ENCODE measurements at regions of chr11 and their contacts with region 1.

Region 1: GRCh38 chr11:22875869-22876473 is 15.7 kb upstream of the CCDC179 start:
- DNase-seq: peak; percentile 89
- H3K4me3 ChIP-seq: no peak overlapping the region
- H3K27ac ChIP-seq: no peak overlapping the region
- H3K4me1 ChIP-seq: peaks cover 3% of the 10 kb centered on the region
- H3K27me3 ChIP-seq: no peaks in the 10 kb centered on the region
- CTCF ChIP-seq: peak; percentile 52 to 60
- POLR2A ChIP-seq: no peak

Region 2: DNA sequence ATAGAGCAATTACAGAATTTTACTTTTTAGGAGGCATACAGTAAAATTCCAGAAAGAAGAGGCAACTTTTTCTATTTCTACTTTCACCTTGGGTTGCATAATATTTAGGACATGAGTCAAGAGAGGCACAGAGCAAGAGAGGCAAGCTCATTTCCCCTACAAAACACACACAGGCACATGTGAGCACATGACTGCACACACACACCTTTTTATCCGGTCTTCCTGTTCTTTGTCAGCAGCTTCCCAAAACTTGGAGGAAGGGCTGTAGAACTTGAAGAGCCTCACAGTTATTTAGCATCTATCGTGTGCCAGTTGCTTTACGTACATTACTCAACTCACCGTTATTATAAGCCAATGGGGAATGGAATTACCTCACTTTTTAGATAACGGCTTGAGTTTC is 22.1 kb after region 1 on chr11:
- CTCF ChIA-PET with region 1: interaction called, 10 read pairs
- POLR2A ChIA-PET with region 1: no interaction called
- dilution Hi-C with region 1: no loop called
- intact Hi-C with region 1: no loop called
- DNase-seq: no peak
- H3K4me3 ChIP-seq: no peak overlapping the region
- H3K27ac ChIP-seq: no peak overlapping the region
- H3K4me1 ChIP-seq: no peaks in the 10 kb centered on the region
- H3K27me3 ChIP-seq: peaks cover 2% of the 10 kb centered on the region in 2 experiments
- CTCF ChIP-seq: no peak
- POLR2A ChIP-seq: no peak

Region 3: DNA sequence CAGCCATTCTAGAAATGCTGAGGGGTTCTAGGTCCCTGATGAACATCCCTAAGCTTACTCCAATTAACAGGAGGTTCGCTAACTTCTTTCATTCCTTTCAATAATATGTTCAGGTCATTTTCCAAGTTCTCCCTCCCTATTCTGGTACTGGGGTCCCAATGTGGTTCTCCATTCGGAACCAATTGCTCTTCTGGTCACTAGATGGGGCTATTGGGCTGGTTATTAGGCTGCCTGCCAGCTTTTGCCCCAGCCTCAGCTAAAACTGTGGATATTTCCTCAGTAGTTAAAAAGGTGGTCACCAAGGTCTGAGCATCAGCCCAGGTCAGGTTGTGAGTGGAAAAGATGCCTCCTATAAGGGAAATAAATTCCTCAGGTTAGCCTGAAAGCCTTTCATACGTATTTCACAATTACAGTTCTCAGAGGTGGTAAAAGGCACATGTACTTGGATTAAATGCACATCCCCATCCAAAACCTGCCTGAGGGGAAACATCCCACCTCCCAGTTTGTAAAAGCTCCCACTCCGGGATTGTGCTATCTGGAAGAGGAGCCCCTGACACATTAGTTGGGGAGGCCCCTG is 145.4 kb after region 1 on chr11:
- CTCF ChIA-PET with region 1: interaction called, 12 read pairs
- POLR2A ChIA-PET with region 1: no interaction called
- dilution Hi-C with region 1: no loop called
- intact Hi-C with region 1: loop called (anchors 1 kb)
- DNase-seq: peak; percentile 33
- H3K4me3 ChIP-seq: no peak overlapping the region
- H3K27ac ChIP-seq: no peak overlapping the region
- H3K4me1 ChIP-seq: no peaks in the 10 kb centered on the region
- H3K27me3 ChIP-seq: no peaks in the 10 kb centered on the region
- CTCF ChIP-seq: peak; percentile 60 to 66
- POLR2A ChIP-seq: no peak

Region 4: DNA sequence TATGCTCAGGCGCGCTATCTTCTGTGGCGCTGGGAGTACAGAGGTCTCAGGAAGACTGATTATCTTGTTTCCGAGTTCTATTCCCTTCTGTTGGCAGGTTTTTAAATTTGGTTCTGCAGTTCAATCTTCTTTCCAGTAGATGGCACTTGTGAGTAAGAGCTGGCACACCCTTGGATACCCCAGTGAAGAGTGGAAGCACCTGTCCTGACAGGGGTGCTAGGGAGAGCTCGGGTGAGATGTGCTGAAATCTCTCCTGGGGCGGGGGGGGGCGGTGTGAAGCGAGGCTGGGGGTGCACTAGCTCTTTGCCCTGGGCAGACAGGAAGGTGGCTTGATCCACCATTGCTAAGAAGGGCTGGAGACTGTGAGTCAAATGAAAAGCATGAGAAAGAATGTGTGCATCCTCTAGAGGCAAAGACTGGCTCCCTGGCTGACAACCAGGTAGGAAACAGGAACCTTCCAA is 664.2 kb after region 1 on chr11:
- CTCF ChIA-PET with region 1: interaction called, 8 read pairs
- POLR2A ChIA-PET with region 1: no interaction called
- dilution Hi-C with region 1: no loop called
- intact Hi-C with region 1: loop called (anchors 2 kb)
- DNase-seq: peak; percentile 61
- H3K4me3 ChIP-seq: no peak overlapping the region
- H3K27ac ChIP-seq: no peak overlapping the region
- H3K4me1 ChIP-seq: peaks cover 7% of the 10 kb centered on the region
- H3K27me3 ChIP-seq: no peaks in the 10 kb centered on the region
- CTCF ChIP-seq: peak; percentile 67 to 74
- POLR2A ChIP-seq: no peak

Region 5: DNA sequence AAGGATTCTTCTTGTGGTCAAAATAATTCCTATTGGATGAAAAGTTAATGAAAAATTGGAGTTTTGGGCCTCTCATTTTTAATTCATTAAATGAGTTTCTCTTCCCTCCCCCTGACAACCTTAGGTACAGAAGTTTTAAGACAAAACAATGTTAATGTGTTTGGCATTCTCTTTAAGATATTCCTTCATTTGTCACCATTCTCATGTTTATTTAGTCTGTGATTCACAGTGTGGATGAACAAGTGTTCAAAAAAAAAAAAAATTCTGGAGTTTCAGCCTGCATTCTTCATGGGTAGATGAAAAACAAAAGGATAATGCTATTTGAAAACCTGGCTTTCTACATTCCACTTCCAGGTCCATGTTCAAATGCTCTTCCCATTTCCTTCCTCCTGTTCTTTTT is 1448.2 kb after region 1 on chr11:
- CTCF ChIA-PET with region 1: interaction called, 9 read pairs
- POLR2A ChIA-PET with region 1: no interaction called
- dilution Hi-C with region 1: no loop called
- intact Hi-C with region 1: loop called (anchors 5 kb)
- DNase-seq: peak; percentile 55
- H3K4me3 ChIP-seq: no peak overlapping the region
- H3K27ac ChIP-seq: no peak overlapping the region
- H3K4me1 ChIP-seq: peaks cover 7% of the 10 kb centered on the region
- H3K27me3 ChIP-seq: no peaks in the 10 kb centered on the region
- CTCF ChIP-seq: no peak
- POLR2A ChIP-seq: no peak

Region 6: DNA sequence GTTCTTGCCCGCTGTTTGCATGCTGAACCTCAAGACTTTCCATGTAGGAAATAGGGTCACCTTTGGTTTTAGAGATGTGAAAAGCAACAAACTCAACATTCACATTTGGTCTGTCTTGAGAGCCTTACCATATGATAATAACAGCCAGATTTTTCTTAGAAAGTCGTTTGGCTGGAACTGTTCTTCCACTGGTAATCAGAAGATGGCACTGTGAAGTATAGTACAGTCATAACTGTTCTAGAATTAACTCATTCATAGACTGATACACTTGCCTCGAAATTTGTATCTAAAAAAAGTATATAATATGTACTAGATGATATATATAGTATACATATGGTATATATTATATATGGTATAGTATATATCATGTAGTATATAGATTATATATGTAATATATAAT is 1633.1 kb after region 1 on chr11:
- CTCF ChIA-PET with region 1: no interaction called
- POLR2A ChIA-PET with region 1: no interaction called
- dilution Hi-C with region 1: no loop called
- intact Hi-C with region 1: loop called (anchors 10 kb)
- DNase-seq: peak; percentile 15
- H3K4me3 ChIP-seq: no peak overlapping the region
- H3K27ac ChIP-seq: no peak overlapping the region
- H3K4me1 ChIP-seq: no peaks in the 10 kb centered on the region
- H3K27me3 ChIP-seq: peaks cover 0 to 2% of the 10 kb centered on the region in 2 experiments
- CTCF ChIP-seq: peak in 1 of 2 donors; percentile 6
- POLR2A ChIP-seq: no peak

Measured in endothelial cell of umbilical vein (primary cell).